ENCODE measurements at regions of chr16 and their contacts with region 1.

Region 1: GRCh38 chr16:74309789-74310781 is 13.5 kb downstream of the PSMD7 start:
- DNase-seq: peak in 2 of 9 experiments; percentile 48 to 62
- ATAC-seq: no peak
- H3K4me3 ChIP-seq: no peak overlapping the region
- H3K4me3 Mint-ChIP-seq: no peak overlapping the region
- H3K27ac ChIP-seq: no peak overlapping the region
- H3K27ac Mint-ChIP-seq: no peak overlapping the region
- H3K4me1 ChIP-seq: no peaks in the 10 kb centered on the region
- H3K4me1 Mint-ChIP-seq: no peaks in the 10 kb centered on the region
- H3K27me3 ChIP-seq: no peaks in the 10 kb centered on the region
- H3K27me3 Mint-ChIP-seq: no peaks in the 10 kb centered on the region
- CTCF ChIP-seq: peak; percentile 63

Region 2: GRCh38 chr16:74296432-74297144 is 13.5 kb before region 1 on chr16 and contains the start of gene PSMD7:
- CTCF ChIA-PET with region 1: interaction called, 3 read pairs
- POLR2A ChIA-PET with region 1: interaction called, 11 read pairs
- intact Hi-C with region 1: no loop called
- DNase-seq: peak; percentile 77 to 93 (median 89)
- ATAC-seq: peak; percentile 86
- H3K4me3 ChIP-seq: peak within 1 kb of the TSS; percentile 83 to 95
- H3K4me3 Mint-ChIP-seq: peak within 1 kb of the TSS; percentile 95
- H3K27ac ChIP-seq: peak within 1 kb of the TSS; percentile 87 to 97
- H3K27ac Mint-ChIP-seq: peak within 1 kb of the TSS; percentile 99
- H3K4me1 ChIP-seq: peaks cover 25% of the 10 kb centered on the region
- H3K4me1 Mint-ChIP-seq: peaks cover 47% of the 10 kb centered on the region
- H3K27me3 ChIP-seq: no peaks in the 10 kb centered on the region
- H3K27me3 Mint-ChIP-seq: no peaks in the 10 kb centered on the region
- CTCF ChIP-seq: no peak
- total RNA-seq, gene PSMD7: 136 to 137 TPM

Region 3: DNA sequence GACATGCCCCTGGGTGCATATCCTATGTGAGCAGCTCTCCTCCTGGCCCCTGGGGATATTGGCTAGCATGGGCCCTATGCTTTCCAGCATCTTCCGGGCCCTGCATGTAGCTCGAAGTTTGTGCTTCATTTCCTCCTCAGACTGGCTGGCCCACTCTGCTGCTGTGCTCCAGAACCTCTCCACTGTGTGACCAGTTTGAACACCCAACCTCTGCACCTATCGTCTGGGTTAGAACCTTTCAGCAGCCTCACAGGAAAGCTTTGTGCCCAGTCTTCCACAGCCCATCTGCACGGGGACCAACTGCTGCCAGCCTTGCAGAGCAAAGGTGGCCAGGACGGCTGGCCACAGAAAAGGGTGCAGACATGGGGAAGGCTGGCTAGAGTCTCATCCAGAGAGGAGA is 121.4 kb after region 1 on chr16:
- CTCF ChIA-PET with region 1: no interaction called
- POLR2A ChIA-PET with region 1: no interaction called
- intact Hi-C with region 1: loop called (anchors 2 to 10 kb)
- DNase-seq: no peak
- ATAC-seq: no peak
- H3K4me3 ChIP-seq: no peak overlapping the region
- H3K4me3 Mint-ChIP-seq: no peak overlapping the region
- H3K27ac ChIP-seq: no peak overlapping the region
- H3K27ac Mint-ChIP-seq: no peak overlapping the region
- H3K4me1 ChIP-seq: no peaks in the 10 kb centered on the region
- H3K4me1 Mint-ChIP-seq: no peaks in the 10 kb centered on the region
- H3K27me3 ChIP-seq: no peaks in the 10 kb centered on the region
- H3K27me3 Mint-ChIP-seq: no peaks in the 10 kb centered on the region
- CTCF ChIP-seq: no peak

Region 4: DNA sequence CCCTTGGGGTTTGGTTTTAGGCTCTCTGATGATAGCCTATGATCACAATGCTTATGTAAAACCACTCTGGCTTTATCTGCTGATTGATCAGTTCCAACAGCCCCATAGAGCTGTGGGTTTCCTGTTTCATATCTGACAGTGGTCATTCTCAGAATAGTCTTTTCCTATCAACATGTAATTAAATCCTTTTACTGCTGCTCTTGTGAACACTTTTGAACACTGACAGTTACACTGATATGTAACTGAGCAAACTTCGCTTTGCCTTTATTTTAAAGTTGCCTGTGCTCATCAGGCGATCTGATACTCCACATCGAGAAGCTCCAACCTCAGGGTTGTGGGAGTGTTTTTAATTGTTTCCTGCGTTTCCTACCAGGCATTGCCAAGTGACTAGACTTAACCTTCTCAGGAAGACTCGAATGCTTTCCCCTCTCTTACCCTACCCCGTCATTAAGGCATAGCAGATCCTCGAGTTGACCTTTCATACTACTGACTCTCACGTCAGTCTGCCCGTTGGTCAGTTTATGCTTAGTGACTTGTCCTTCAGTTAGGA is 128.5 kb after region 1 on chr16:
- CTCF ChIA-PET with region 1: no interaction called
- POLR2A ChIA-PET with region 1: no interaction called
- intact Hi-C with region 1: loop called in 1 of 2 experiments (anchors 10 kb)
- DNase-seq: peak in 1 of 9 experiments; percentile 15
- ATAC-seq: no peak
- H3K4me3 ChIP-seq: no peak overlapping the region
- H3K4me3 Mint-ChIP-seq: peak overlapping the region; percentile 12
- H3K27ac ChIP-seq: peak overlapping the region in 1 of 2 experiments; percentile 33
- H3K27ac Mint-ChIP-seq: peak overlapping the region; percentile 66
- H3K4me1 ChIP-seq: peaks cover 9% of the 10 kb centered on the region
- H3K4me1 Mint-ChIP-seq: peaks cover 12% of the 10 kb centered on the region
- H3K27me3 ChIP-seq: no peaks in the 10 kb centered on the region
- H3K27me3 Mint-ChIP-seq: no peaks in the 10 kb centered on the region
- CTCF ChIP-seq: no peak

Measured in CD8-positive, alpha-beta T cell (primary cell).